Dendritic cell treated with granulocyte-macrophage colony-stimulating factor and Interleukin-4, amounts not matched to agents 40 ng/mL and 50 ng/mL, for 4 days (primary cell): ENCODE measurements at regions of chr14 and their contacts with region 1.

Region 1: GRCh38 chr14:57508756-57509155 is 15.1 kb upstream of the CCDC198 start:
- H3K4me3 Mint-ChIP-seq: no peak overlapping the region
- H3K27ac Mint-ChIP-seq: no peak overlapping the region
- H3K4me1 Mint-ChIP-seq: no peaks in the 10 kb centered on the region
- H3K27me3 Mint-ChIP-seq: no peaks in the 10 kb centered on the region

Region 2: DNA sequence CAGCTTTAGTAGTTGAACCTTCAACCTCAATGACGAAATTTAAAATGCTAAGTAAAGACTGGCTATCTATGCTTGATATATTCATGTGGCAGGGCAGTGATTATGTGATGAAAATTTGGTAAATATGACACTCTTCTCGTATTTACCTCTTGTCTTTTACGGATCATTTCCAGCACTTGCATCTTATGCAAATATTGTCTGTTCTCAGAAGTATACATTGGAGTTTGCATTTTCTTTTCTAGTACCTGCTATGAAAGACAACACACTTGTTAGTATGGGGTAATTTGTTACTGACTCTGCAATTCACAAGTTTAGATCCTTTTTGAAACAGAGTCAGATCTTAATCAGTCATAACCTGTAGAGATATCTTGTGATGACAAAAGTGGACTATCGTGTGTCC is 27.3 kb before region 1 on chr14:
- intact Hi-C with region 1: loop called (anchors 1 kb)
- H3K4me3 Mint-ChIP-seq: no peak overlapping the region
- H3K27ac Mint-ChIP-seq: no peak overlapping the region
- H3K4me1 Mint-ChIP-seq: no peaks in the 10 kb centered on the region
- H3K27me3 Mint-ChIP-seq: no peaks in the 10 kb centered on the region